MCF 10A (cell line): ENCODE measurements at regions of chr10 and their contacts with region 1.

Region 1: DNA sequence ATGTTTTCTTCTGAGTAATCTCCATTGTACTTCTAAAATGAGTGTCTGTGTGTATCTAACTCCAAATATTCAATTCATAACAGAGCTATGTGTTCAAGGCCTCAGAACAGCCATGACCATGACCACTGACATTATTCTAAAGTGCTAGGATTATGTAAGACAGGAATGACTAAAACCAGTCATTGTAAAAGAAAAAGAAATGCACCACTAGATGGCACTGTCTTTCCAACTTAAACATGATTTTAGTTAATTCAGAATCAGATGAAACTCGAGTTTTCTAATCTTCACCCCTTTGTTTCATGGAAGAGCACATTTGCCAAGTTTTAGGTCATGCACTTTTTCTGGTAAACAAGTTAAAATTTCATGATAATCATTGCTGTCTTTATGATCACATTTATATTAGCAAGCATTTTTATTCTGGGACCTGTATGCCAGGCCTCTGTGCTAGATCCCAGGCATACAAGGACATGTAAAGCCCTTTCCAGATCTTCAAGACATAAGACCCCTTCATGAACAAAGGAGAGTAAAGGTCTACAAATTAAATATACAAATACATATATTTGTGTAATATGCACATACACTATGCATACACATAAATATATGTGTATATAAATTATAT is 26.1 kb upstream of the RSU1 start:
- DNase-seq: peak; percentile 74
- H3K4me3 Mint-ChIP-seq: no peak overlapping the region
- H3K27ac Mint-ChIP-seq: no peak overlapping the region
- H3K4me1 Mint-ChIP-seq: no peaks in the 10 kb centered on the region
- H3K27me3 Mint-ChIP-seq: no peaks in the 10 kb centered on the region
- CTCF ChIP-seq: peak; percentile 61

Region 2: GRCh38 chr10:16828114-16828568 is 15.2 kb before region 1 on chr10:
- CTCF ChIA-PET with region 1: interaction called, 12 read pairs
- POLR2A ChIA-PET with region 1: no interaction called
- intact Hi-C with region 1: no loop called
- DNase-seq: peak; percentile 90
- H3K4me3 Mint-ChIP-seq: no peak overlapping the region
- H3K27ac Mint-ChIP-seq: no peak overlapping the region
- H3K4me1 Mint-ChIP-seq: peaks cover 19% of the 10 kb centered on the region
- H3K27me3 Mint-ChIP-seq: no peaks in the 10 kb centered on the region
- CTCF ChIP-seq: peak; percentile 53

Region 3: GRCh38 chr10:17178006-17178405 is 334.6 kb after region 1 on chr10:
- CTCF ChIA-PET with region 1: interaction called, 3 read pairs
- POLR2A ChIA-PET with region 1: no interaction called
- intact Hi-C with region 1: loop called (anchors 1 kb)
- DNase-seq: no peak
- H3K4me3 Mint-ChIP-seq: no peak overlapping the region
- H3K27ac Mint-ChIP-seq: no peak overlapping the region
- H3K4me1 Mint-ChIP-seq: peaks cover 6% of the 10 kb centered on the region
- H3K27me3 Mint-ChIP-seq: no peaks in the 10 kb centered on the region
- CTCF ChIP-seq: no peak

Region 4: DNA sequence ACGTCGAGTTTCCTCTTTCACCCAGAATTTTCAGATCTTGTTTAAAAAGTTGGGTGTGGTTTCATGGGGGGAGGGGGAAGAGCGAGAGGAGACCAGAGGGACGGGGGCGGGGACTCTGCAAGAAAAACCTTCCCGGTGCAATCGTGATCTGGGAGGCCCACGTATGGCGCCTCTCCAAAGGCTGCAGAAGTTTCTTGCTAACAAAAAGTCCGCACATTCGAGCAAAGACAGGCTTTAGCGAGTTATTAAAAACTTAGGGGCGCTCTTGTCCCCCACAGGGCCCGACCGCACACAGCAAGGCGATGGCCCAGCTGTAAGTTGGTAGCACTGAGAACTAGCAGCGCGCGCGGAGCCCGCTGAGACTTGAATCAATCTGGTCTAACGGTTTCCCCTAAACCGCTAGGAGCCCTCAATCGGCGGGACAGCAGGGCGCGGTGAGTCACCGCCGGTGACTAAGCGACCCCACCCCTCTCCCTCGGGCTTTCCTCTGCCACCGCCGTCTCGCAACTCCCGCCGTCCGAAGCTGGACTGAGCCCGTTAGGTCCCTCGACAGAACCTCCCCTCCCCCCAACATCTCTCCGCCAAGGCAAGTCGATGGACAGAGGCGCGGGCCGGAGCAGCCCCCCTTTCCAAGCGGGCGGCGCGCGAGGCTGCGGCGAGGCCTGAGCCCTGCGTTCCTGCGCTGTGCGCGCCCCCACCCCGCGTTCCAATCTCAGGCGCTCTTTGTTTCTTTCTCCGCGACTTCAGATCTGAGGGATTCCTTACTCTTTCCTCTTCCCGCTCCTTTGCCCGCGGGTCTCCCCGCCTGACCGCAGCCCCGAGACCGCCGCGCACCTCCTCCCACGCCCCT is 385.0 kb after region 1 on chr10 and contains the start of gene VIM:
- CTCF ChIA-PET with region 1: interaction called, 14 read pairs
- POLR2A ChIA-PET with region 1: interaction called, 5 read pairs
- intact Hi-C with region 1: no loop called
- DNase-seq: peak; percentile 97
- H3K4me3 Mint-ChIP-seq: peak within 1 kb of the TSS; percentile 76
- H3K27ac Mint-ChIP-seq: peak within 1 kb of the TSS; percentile 95
- H3K4me1 Mint-ChIP-seq: peaks cover 18% of the 10 kb centered on the region
- H3K27me3 Mint-ChIP-seq: no peaks in the 10 kb centered on the region
- CTCF ChIP-seq: no peak
- total RNA-seq, gene VIM: 1,413 and 1,430 TPM in 2 replicates

Region 5: GRCh38 chr10:17257466-17258321 is 414.3 kb after region 1 on chr10:
- CTCF ChIA-PET with region 1: interaction called, 27 read pairs
- POLR2A ChIA-PET with region 1: no interaction called
- intact Hi-C with region 1: loop called (anchors 1 kb)
- DNase-seq: peak; percentile 78
- H3K4me3 Mint-ChIP-seq: peak overlapping the region; percentile 56
- H3K27ac Mint-ChIP-seq: no peak overlapping the region
- H3K4me1 Mint-ChIP-seq: peaks cover 6% of the 10 kb centered on the region
- H3K27me3 Mint-ChIP-seq: no peaks in the 10 kb centered on the region
- CTCF ChIP-seq: peak; percentile 68